MCF 10A (cell line): ENCODE measurements at regions of chr1 and their contacts with region 1.

Region 1: DNA sequence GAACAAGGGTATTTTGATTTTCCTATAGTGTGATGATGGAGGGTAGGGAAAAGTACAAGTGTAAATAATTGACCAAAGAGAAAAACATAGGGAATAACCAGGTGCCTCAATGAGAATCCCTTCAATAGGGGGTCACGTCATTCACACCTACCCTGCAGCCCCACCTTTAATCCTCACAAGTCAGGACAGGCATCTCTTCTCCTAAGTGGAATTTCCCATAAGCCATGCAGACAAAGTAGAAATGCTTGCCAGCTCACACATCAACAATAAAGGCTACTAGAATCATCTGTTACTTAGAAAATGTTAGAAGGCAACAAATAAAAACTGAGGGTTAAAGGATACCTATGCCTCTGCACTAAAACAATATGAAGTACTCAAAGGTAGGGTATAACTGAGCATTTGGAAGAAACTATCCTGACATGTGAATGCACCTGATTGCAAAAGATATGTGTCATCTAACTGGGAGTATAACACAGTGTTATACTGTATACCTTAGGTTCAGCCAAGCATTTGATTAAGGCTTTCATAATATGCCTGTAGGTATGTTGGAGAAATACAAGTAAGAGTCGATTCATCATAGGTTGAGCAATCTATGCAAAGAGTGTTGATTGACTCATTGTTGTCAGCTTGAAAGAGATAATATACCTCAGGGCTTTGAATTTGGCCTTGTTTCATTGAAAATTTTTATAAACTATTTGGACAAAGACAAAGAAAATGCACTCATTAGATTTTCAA is 32.4 kb upstream of the ATP1A1 start:
- DNase-seq: peak; percentile 92
- H3K4me3 Mint-ChIP-seq: peak overlapping the region; percentile 16
- H3K27ac Mint-ChIP-seq: peak overlapping the region; percentile 63
- H3K4me1 Mint-ChIP-seq: peaks cover 19% of the 10 kb centered on the region
- H3K27me3 Mint-ChIP-seq: no peaks in the 10 kb centered on the region
- CTCF ChIP-seq: no peak

Region 2: GRCh38 chr1:116104667-116105205 is 235.9 kb before region 1 on chr1:
- CTCF ChIA-PET with region 1: no interaction called
- POLR2A ChIA-PET with region 1: no interaction called
- intact Hi-C with region 1: no loop called
- DNase-seq: no peak
- H3K4me3 Mint-ChIP-seq: no peak overlapping the region
- H3K27ac Mint-ChIP-seq: no peak overlapping the region
- H3K4me1 Mint-ChIP-seq: peaks cover under 1% of the 10 kb centered on the region
- H3K27me3 Mint-ChIP-seq: no peaks in the 10 kb centered on the region
- CTCF ChIP-seq: no peak

Region 3: DNA sequence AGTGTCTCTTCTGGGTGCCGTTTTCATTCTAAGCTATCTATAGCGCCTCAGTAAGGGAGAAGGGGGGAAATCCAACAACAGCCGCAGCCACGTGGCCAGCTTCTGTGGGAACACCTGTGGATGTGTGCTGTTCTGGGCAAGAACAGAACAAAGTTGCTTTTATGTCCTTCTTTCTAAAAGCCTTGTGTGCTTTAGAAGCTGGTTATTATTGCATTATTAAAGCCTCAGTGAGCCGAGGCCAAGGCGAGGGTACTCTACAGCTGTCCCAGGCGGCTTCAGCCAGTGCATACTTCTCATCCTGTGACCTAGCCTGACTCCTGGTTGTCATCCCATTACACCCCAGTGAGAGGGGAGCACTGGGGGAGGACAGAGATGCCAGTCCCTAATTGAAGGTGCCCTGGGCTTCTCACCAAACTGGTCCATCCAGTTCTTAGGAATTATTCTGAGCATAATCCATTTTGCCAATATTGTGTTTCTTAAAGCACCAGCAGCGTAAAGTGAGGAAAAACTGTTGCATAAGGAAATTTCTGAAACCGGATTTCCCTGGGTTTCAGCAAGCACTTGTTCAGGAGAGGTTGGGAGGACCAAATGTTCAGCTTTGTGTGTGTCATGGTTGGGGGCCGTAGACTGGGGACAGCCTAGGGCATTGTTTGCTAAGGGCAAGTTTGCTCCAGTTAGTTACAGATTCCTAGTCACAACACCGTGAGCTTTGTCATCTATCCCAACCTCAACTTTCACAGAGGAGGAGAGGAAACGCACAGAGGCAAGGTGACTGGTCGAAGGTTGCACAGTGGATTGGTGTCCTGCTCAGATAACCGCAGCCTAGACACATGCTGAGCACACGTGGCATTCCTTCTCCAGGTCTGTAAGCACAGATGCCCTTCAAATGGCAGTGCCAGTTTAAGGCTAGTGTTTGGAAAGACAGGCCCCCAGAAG is 28.6 kb before region 1 on chr1:
- CTCF ChIA-PET with region 1: interaction called, 3 read pairs
- POLR2A ChIA-PET with region 1: interaction called, 14 read pairs
- intact Hi-C with region 1: no loop called
- DNase-seq: no peak
- H3K4me3 Mint-ChIP-seq: no peak overlapping the region
- H3K27ac Mint-ChIP-seq: no peak overlapping the region
- H3K4me1 Mint-ChIP-seq: peaks cover 11% of the 10 kb centered on the region
- H3K27me3 Mint-ChIP-seq: no peaks in the 10 kb centered on the region
- CTCF ChIP-seq: no peak